GM13977 (cell line): ENCODE measurements at regions of chr18 and their contacts with region 1.

Region 1: GRCh38 chr18:11883153-11883552 is 25.0 kb downstream of the MPPE1 start:
- DNase-seq: peak; percentile 75
- CTCF ChIP-seq: no peak

Region 2: GRCh38 chr18:11785458-11786055 is 97.6 kb before region 1 on chr18:
- in situ Hi-C with region 1: loop called (anchors 25 kb)
- DNase-seq: no peak
- CTCF ChIP-seq: no peak